ENCODE measurements at regions of chr7 and their contacts with region 1.

Region 1: DNA sequence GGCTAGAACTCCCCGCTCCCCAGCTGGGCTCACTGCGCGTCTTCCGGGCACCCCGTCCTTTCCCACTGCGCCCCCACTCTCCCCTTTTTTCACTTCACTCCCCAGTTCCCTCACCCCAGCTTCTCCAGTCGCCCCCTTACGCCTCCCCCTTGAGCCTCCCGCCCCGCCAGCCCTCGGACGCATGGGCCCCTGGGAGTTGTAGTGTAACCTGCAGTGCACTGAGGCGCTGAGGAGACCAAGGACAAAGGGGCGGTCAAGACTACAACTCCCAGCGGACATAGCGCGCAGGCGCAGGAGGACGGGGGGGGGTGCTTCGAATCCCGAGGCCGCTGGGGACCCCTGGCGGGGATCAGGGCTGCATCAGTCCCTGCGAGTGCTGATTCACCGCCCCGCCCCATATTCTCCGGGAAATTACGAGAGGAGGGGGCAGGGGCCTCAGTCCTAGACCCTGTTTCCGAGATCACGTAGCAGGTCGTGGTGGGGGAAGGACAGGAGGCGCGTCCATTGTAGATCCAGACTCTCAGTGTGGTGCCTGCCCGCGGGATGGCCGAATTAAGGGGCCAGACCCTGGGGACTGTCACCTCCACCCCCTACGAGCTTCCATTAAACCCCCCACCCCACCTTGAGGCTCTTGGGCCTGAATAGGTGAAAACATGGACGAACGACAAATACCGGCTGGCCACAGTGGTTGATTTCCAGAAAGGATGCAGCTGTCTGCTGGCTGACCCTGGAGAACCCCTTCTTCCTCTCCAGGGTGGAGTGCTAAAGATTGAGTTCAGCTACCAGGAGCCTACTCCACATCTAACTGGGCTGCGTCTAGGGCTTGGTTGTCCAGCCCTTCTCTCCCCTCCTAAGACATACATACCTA is 554 bp upstream of the YWHAG start:
- DNase-seq: peak; percentile 93
- H3K4me3 ChIP-seq: peak overlapping the region; percentile 96
- CTCF ChIP-seq: peak; percentile 84

Region 2: DNA sequence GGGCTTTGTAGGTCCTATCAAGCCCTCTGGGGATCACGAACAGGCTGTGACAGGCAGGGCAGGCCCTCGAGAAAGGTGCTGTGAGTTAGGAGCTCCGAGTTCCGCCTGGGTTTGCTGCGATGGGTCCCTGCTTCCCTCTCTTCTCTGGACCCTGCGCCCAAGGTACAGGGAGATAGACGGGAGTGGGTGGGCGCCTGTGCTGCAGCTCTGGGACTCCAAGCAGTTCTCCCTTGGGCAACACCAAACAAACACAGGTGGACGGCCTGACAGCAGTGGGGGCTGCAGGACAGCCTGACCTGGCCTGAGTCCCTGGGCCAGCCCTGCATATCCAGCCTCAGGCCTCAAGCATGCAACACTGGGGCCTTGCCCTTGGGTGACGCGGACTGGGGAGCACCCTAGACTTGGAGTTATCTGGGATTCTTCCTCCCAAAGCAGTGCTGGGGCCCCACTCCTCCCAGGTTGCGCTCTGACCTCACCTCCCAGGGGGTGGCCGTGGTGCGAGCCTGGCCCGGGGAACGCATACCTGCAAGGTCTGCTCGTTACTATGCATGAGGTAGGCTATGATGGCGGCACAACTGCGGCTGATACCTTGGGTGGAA is 358.9 kb before region 1 on chr7:
- CTCF ChIA-PET with region 1: no interaction called
- POLR2A ChIA-PET with region 1: no interaction called
- DNase-seq: no peak
- H3K4me3 ChIP-seq: no peak overlapping the region
- CTCF ChIP-seq: no peak

Region 3: GRCh38 chr7:76334320-76334967 is 24.9 kb before region 1 on chr7:
- CTCF ChIA-PET with region 1: interaction called, 11 read pairs
- POLR2A ChIA-PET with region 1: interaction called, 3 read pairs
- DNase-seq: no peak
- H3K4me3 ChIP-seq: no peak overlapping the region
- CTCF ChIP-seq: no peak

Region 4: GRCh38 chr7:76372984-76373833 is 13.9 kb after region 1 on chr7:
- CTCF ChIA-PET with region 1: interaction called, 20 read pairs
- POLR2A ChIA-PET with region 1: interaction called, 3 read pairs
- DNase-seq: no peak
- H3K4me3 ChIP-seq: no peak overlapping the region
- CTCF ChIP-seq: no peak

Region 5: GRCh38 chr7:76403780-76404494 is 44.6 kb after region 1 on chr7:
- CTCF ChIA-PET with region 1: no interaction called
- POLR2A ChIA-PET with region 1: no interaction called
- DNase-seq: no peak
- H3K4me3 ChIP-seq: no peak overlapping the region
- CTCF ChIP-seq: no peak